HCT116 (cell line): ENCODE measurements at regions of chr22 and their contacts with region 1.

Region 1: GRCh38 chr22:26038365-26038764 is 130.9 kb upstream of the SEZ6L start:
- DNase-seq: no peak
- ATAC-seq: no peak
- H3K4me3 ChIP-seq: no peak overlapping the region
- H3K27ac ChIP-seq: no peak overlapping the region
- H3K4me1 ChIP-seq: no peaks in the 10 kb centered on the region
- H3K27me3 ChIP-seq: peaks cover 3% of the 10 kb centered on the region; the same call in 1 of the 2 replicates
- CTCF ChIP-seq: no peak
- POLR2A ChIP-seq: no peak
- RAD21 ChIP-seq: no peak

Region 2: DNA sequence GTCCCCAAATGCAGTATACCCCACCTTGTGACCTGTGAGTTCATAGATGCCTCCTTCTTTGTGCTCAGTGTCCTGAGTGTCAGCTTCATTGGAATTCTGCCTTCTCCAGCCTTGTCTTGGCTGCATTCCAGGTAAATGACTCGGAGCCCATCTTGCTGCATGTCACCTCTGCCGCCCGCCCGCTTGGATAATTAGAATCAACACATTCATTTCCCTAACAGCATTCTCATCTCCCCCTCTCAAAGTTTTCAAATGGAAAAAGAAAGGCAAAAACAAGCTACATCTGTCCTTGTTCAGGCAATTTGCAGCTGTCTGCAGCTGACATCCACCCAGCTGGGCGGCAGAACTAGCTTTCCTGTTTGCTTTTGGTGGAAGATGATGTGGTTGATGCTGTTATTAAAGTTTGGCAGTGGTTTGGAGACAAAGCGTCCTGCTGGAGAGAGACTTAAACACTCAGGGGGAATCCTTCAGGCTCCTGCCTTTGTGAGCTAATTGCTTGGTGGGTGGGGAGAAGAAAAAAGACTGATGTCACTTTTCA is 67.9 kb before region 1 on chr22:
- CTCF ChIA-PET with region 1: no interaction called
- POLR2A ChIA-PET with region 1: no interaction called
- RAD21 ChIA-PET with region 1: no interaction called
- intact Hi-C with region 1: loop called (anchors 10 kb)
- DNase-seq: no peak
- ATAC-seq: no peak
- H3K4me3 ChIP-seq: no peak overlapping the region
- H3K27ac ChIP-seq: no peak overlapping the region
- H3K4me1 ChIP-seq: no peaks in the 10 kb centered on the region
- H3K27me3 ChIP-seq: peaks cover 41% of the 10 kb centered on the region
- CTCF ChIP-seq: no peak
- POLR2A ChIP-seq: no peak
- RAD21 ChIP-seq: no peak